Sciatic nerve (tissue), 2 donors: ENCODE measurements at regions of chr11 and their contacts with region 1.

Region 1: GRCh38 chr11:74437441-74438042 is 29.8 kb downstream of the KCNE3 start:
- DNase-seq: no peak
- ATAC-seq: no peak

Region 2: GRCh38 chr11:73480677-73481076 is 956.9 kb before region 1 on chr11:
- intact Hi-C with region 1: loop called (anchors 5 kb)
- DNase-seq: no peak
- ATAC-seq: peak; percentile 63

Region 3: DNA sequence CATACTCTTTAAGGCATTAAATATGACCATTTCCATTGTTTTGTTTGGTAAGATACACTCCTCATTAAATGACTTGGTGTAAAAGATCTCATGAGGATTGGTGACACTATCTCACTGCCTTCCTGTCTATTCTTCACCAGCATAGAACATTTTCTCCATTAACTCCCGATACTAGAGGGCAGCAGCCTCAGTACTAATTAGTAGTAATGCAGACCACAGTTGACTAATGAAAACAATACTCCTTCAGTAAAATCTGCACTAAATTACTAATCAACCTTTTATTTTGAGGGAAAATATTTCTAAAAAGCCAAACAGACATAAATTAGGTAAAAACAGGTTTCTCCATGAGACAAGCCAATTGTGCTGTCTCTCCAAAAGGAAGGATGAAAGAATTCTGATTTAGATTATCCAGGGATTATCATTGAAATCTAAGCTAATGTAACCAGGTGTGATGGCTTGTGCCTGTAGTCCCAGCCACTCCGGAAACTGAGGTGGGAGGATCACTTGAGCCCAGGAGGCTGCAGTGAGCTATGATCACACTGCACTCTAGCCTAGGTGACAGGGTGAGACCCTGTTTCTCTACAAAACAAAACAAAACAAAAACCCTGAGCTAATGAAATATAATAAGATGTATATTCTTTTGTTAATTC is 48.7 kb before region 1 on chr11:
- intact Hi-C with region 1: no loop called
- DNase-seq: no peak
- ATAC-seq: peak; percentile 67

Region 4: GRCh38 chr11:74453373-74453975 is 15.9 kb after region 1 on chr11:
- intact Hi-C with region 1: no loop called
- DNase-seq: peak; percentile 81
- ATAC-seq: peak; percentile 63